ENCODE measurements at regions of chr22 and their contacts with region 1.

Region 1: GRCh38 chr22:26658671-26659478 is 1.5 kb downstream of the MIAT start:
- DNase-seq: no peak
- H3K4me3 ChIP-seq: peak overlapping the region in 3 of 4 donors; percentile 11 to 34 (median 25)
- H3K27ac ChIP-seq: no peak overlapping the region
- H3K4me1 ChIP-seq: peaks cover 0 to 26% (median 25%) of the 10 kb centered on the region in 4 donors
- H3K27me3 ChIP-seq: peaks cover 21 to 78% (median 39%) of the 10 kb centered on the region in 3 donors
- CTCF ChIP-seq: no peak
- EP300 ChIP-seq: no peak
- POLR2A ChIP-seq: no peak

Region 2: GRCh38 chr22:26589845-26590736 is 68.8 kb before region 1 on chr22 and contains the start of gene TPST2:
- intact Hi-C with region 1: loop called (anchors 5 kb)
- DNase-seq: peak; percentile 86
- H3K4me3 ChIP-seq: peak within 1 kb of the TSS; percentile 65 to 85 (median 78)
- H3K27ac ChIP-seq: peak within 1 kb of the TSS; percentile 75 to 80 (median 78)
- H3K4me1 ChIP-seq: peaks cover 4 to 19% (median 12%) of the 10 kb centered on the region in 4 donors
- H3K27me3 ChIP-seq: no peaks in the 10 kb centered on the region
- CTCF ChIP-seq: no peak
- EP300 ChIP-seq: no peak
- POLR2A ChIP-seq: peak; percentile 25 to 37
- total RNA-seq, gene TPST2: 15.9 to 24.3 (median 17.2) TPM

Region 3: DNA sequence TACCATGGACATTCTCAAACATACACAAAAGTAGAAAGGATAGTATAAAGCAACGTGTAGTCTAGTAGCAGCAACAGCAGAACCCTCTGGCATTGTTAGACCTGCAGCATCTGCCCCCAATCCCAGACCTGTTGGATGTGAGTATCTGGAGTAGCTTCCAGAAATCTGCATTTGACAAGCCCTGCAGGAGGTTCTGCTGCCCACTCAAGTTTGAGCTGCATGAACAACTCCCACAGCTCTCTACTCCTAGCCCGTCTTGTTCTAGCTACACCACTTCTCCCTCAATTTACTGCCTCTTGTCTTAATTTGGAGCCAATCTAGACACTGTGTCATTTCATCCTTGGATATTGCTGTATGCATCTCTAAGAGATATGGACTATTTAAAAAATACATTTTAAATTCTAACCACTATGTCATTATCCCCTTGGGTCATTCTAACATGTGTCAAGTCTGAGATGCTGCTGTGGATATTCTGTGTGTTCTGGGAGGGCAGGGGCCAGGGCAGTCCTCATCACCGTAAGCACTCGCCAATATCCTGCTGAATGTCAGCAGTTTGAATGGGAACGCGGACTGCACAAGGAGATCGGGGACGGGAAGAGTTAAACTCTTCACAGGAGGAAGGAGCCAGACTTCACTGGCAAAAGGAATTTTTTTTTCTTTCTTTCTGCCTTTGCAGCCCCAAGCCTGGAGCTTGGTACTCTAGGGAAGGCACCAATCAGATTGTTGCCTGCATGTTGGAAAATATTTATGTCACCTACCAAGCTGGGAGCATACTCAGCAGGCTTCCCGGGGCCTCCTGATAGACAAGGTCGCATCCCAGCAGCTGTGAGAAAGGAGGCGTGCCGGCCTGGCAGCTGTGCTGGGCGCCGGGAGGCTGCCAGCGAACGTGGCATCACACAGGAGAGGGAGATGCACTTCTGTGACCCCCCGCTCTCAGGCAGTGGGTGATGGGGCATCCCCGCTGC is 427.5 kb after region 1 on chr22:
- intact Hi-C with region 1: no loop called
- DNase-seq: no peak
- H3K4me3 ChIP-seq: no peak overlapping the region
- H3K27ac ChIP-seq: no peak overlapping the region
- H3K4me1 ChIP-seq: peaks cover 0 to 5% (median 2%) of the 10 kb centered on the region in 4 donors
- H3K27me3 ChIP-seq: no peaks in the 10 kb centered on the region
- CTCF ChIP-seq: no peak
- EP300 ChIP-seq: no peak
- POLR2A ChIP-seq: no peak

Measured in sigmoid colon (tissue), 7 donors.